Endothelial cell of umbilical vein (primary cell): ENCODE measurements at regions of chr9 and their contacts with region 1.

Region 1: GRCh38 chr9:9605681-9606080 is 1007.1 kb downstream of the PTPRD start:
- DNase-seq: no peak
- H3K4me3 ChIP-seq: no peak overlapping the region
- H3K27ac ChIP-seq: no peak overlapping the region
- H3K4me1 ChIP-seq: no peaks in the 10 kb centered on the region
- H3K27me3 ChIP-seq: peaks cover 0 to 2% of the 10 kb centered on the region in 2 experiments
- CTCF ChIP-seq: no peak
- POLR2A ChIP-seq: no peak

Region 2: DNA sequence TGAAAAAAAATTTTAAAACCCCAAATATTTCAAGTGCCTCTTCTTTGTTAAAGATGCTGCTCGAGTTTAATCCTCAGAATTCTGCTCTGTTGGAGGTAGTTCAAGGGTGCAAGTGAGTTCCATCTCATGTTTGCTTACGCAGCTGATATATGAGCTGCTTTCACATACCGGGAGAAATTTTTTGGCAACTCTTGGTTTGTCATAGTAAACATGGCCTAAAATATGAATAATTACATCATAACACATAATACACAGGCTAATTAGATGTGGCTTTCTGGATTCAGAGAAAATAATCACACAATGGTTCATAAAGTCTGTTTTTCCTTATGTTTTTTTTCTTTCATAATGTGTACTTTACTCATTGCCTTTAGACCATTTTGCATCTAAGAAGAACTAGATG is 126.9 kb before region 1 on chr9:
- CTCF ChIA-PET with region 1: no interaction called
- POLR2A ChIA-PET with region 1: no interaction called
- dilution Hi-C with region 1: no loop called
- intact Hi-C with region 1: no loop called
- DNase-seq: no peak
- H3K4me3 ChIP-seq: no peak overlapping the region
- H3K27ac ChIP-seq: no peak overlapping the region
- H3K4me1 ChIP-seq: no peaks in the 10 kb centered on the region
- H3K27me3 ChIP-seq: no peaks in the 10 kb centered on the region
- CTCF ChIP-seq: no peak
- POLR2A ChIP-seq: no peak

Region 3: GRCh38 chr9:9489183-9489582 is 116.5 kb before region 1 on chr9:
- CTCF ChIA-PET with region 1: no interaction called
- POLR2A ChIA-PET with region 1: no interaction called
- dilution Hi-C with region 1: no loop called
- intact Hi-C with region 1: no loop called
- DNase-seq: no peak
- H3K4me3 ChIP-seq: no peak overlapping the region
- H3K27ac ChIP-seq: no peak overlapping the region
- H3K4me1 ChIP-seq: no peaks in the 10 kb centered on the region
- H3K27me3 ChIP-seq: no peaks in the 10 kb centered on the region
- CTCF ChIP-seq: no peak
- POLR2A ChIP-seq: no peak

Region 4: GRCh38 chr9:9778293-9778692 is 172.6 kb after region 1 on chr9:
- CTCF ChIA-PET with region 1: interaction called, 48 read pairs
- POLR2A ChIA-PET with region 1: no interaction called
- dilution Hi-C with region 1: no loop called
- intact Hi-C with region 1: no loop called
- DNase-seq: peak; percentile 24
- H3K4me3 ChIP-seq: no peak overlapping the region
- H3K27ac ChIP-seq: peak overlapping the region; percentile 43
- H3K4me1 ChIP-seq: peaks cover 37% of the 10 kb centered on the region
- H3K27me3 ChIP-seq: no peaks in the 10 kb centered on the region
- CTCF ChIP-seq: no peak
- POLR2A ChIP-seq: no peak

Region 5: GRCh38 chr9:9783711-9784110 is 178.0 kb after region 1 on chr9:
- CTCF ChIA-PET with region 1: interaction called, 806 read pairs
- POLR2A ChIA-PET with region 1: no interaction called
- dilution Hi-C with region 1: no loop called
- intact Hi-C with region 1: no loop called
- DNase-seq: peak; percentile 29
- H3K4me3 ChIP-seq: no peak overlapping the region
- H3K27ac ChIP-seq: peak overlapping the region; percentile 45
- H3K4me1 ChIP-seq: peaks cover 21% of the 10 kb centered on the region
- H3K27me3 ChIP-seq: no peaks in the 10 kb centered on the region
- CTCF ChIP-seq: no peak
- POLR2A ChIP-seq: no peak

Region 6: DNA sequence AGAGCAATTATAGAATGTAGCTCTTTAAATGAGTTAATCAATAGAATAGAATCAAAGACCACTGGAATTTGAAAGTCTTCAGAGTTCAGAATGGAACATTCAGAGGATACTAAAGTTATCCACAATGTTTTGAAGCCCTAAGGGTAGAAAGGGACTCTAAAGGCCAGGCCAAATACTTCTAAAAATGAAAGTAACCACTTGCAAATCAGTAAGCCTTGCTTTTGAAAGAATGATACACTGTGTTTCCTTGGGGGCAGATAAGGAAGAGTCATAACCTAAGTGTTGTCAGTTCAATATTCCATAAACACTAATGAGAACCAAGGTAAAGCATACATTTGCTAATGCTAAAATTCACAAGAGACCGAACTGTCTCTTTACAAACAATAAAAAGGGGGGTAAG is 193.6 kb after region 1 on chr9:
- CTCF ChIA-PET with region 1: interaction called, 806 read pairs
- POLR2A ChIA-PET with region 1: no interaction called
- dilution Hi-C with region 1: no loop called
- intact Hi-C with region 1: no loop called
- DNase-seq: no peak
- H3K4me3 ChIP-seq: no peak overlapping the region
- H3K27ac ChIP-seq: no peak overlapping the region
- H3K4me1 ChIP-seq: no peaks in the 10 kb centered on the region
- H3K27me3 ChIP-seq: peaks cover 0 to 2% of the 10 kb centered on the region in 2 experiments
- CTCF ChIP-seq: no peak
- POLR2A ChIP-seq: no peak